ENCODE measurements at regions of chr4 and their contacts with region 1.

Region 1: DNA sequence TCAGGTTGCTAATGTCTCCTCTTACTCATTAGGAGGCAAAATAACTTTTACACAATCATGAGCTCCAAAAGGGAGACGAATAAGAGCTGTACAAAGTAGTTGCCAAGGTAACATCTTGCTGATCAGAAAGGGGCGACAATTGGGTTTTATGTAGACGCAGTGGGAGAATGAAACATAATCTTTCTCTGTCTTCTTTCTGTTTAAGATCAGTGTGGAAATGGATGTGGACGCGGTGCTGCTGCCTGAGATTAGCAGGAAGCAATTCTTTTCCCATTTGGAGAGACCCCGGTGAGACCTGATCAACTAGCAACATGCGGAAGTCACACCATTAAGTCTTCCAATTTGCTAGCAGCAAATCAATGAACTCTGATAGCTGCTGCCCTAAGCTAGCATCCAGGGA is 90.7 kb upstream of the IGFBP7 start:
- DNase-seq: no peak
- H3K4me3 ChIP-seq: no peak overlapping the region
- H3K27ac ChIP-seq: no peak overlapping the region
- H3K4me1 ChIP-seq: no peaks in the 10 kb centered on the region
- CTCF ChIP-seq: no peak

Region 2: GRCh38 chr4:56981795-56982201 is 219.1 kb before region 1 on chr4:
- CTCF ChIA-PET with region 1: no interaction called
- POLR2A ChIA-PET with region 1: no interaction called
- intact Hi-C with region 1: no loop called
- DNase-seq: no peak
- H3K4me3 ChIP-seq: peak overlapping the region; percentile 98
- H3K27ac ChIP-seq: no peak overlapping the region
- H3K4me1 ChIP-seq: peaks cover 28% of the 10 kb centered on the region
- CTCF ChIP-seq: no peak

Region 3: GRCh38 chr4:57172065-57172464 is 28.9 kb before region 1 on chr4:
- CTCF ChIA-PET with region 1: no interaction called
- POLR2A ChIA-PET with region 1: no interaction called
- intact Hi-C with region 1: loop called (anchors 1 kb)
- DNase-seq: no peak
- H3K4me3 ChIP-seq: no peak overlapping the region
- H3K27ac ChIP-seq: no peak overlapping the region
- H3K4me1 ChIP-seq: no peaks in the 10 kb centered on the region
- CTCF ChIP-seq: no peak

Measured in OCI-LY7 (cell line).